Activated B cell treated with CpG ODN at 0.5 μM for 24 hours (primary cell): ENCODE measurements at regions of chr1 and their contacts with region 1.

Region 1: GRCh38 chr1:160085686-160086455 is 4.5 kb downstream of the KCNJ9 start:
- DNase-seq: peak; percentile 60
- ATAC-seq: peak; percentile 68
- H3K4me3 Mint-ChIP-seq: no peak overlapping the region
- H3K27ac Mint-ChIP-seq: no peak overlapping the region
- H3K4me1 Mint-ChIP-seq: peaks cover 14% of the 10 kb centered on the region
- H3K27me3 Mint-ChIP-seq: peaks cover 16% of the 10 kb centered on the region
- CTCF ChIP-seq: no peak

Region 2: GRCh38 chr1:158516966-158517365 is 1568.9 kb before region 1 on chr1:
- CTCF ChIA-PET with region 1: no interaction called
- POLR2A ChIA-PET with region 1: no interaction called
- intact Hi-C with region 1: no loop called
- DNase-seq: no peak
- ATAC-seq: no peak
- H3K4me3 Mint-ChIP-seq: no peak overlapping the region
- H3K27ac Mint-ChIP-seq: no peak overlapping the region
- H3K4me1 Mint-ChIP-seq: no peaks in the 10 kb centered on the region
- H3K27me3 Mint-ChIP-seq: peaks cover 13% of the 10 kb centered on the region
- CTCF ChIP-seq: no peak

Region 3: GRCh38 chr1:159936273-159936904 is 149.5 kb before region 1 on chr1:
- CTCF ChIA-PET with region 1: interaction called, 4 read pairs
- POLR2A ChIA-PET with region 1: no interaction called
- intact Hi-C with region 1: loop called (anchors 1 kb)
- DNase-seq: peak; percentile 86
- ATAC-seq: peak; percentile 89
- H3K4me3 Mint-ChIP-seq: peak overlapping the region; percentile 25
- H3K27ac Mint-ChIP-seq: no peak overlapping the region
- H3K4me1 Mint-ChIP-seq: peaks cover 47% of the 10 kb centered on the region
- H3K27me3 Mint-ChIP-seq: peaks cover 4% of the 10 kb centered on the region
- CTCF ChIP-seq: peak; percentile 91

Region 4: DNA sequence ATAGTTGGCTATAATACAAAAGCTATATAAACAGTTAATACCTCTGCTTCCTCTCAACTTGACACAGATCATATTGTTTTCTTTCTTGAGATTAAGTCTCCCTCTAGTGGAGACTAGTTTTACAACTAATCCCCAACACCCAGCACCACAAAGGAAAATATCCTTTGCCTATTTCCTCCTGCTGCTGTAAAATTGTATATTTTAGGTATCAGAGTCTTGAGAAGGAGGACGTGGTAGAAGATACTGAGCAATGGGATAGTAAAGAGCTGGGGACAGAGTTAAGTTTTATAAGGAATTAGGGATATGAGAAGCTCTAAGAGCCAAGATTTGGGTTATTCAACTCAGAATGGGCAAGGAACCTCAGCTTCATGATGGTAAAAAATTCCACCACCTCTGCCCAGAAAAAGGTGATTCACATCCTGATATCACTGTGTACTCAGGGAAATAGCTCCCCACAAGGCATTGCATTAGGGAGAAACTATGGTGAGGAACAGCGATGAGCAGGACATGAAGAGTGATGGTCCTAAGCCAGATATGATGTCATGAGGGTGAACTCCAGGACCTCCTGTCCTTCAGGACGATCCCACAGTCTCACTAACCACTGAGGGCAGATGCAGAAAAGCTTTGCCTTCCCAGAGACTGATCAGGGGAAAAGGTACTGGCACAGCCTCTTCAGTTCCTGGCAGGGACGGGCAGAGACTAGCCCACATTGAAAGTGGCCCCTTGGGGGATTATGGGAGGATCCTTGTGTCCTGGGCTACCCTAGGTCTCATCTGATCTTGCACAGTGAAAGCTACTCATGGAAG is 1296.5 kb after region 1 on chr1:
- CTCF ChIA-PET with region 1: no interaction called
- POLR2A ChIA-PET with region 1: no interaction called
- intact Hi-C with region 1: no loop called
- DNase-seq: no peak
- ATAC-seq: peak; percentile 90
- H3K4me3 Mint-ChIP-seq: no peak overlapping the region
- H3K27ac Mint-ChIP-seq: no peak overlapping the region
- H3K4me1 Mint-ChIP-seq: peaks cover 7% of the 10 kb centered on the region
- H3K27me3 Mint-ChIP-seq: no peaks in the 10 kb centered on the region
- CTCF ChIP-seq: no peak